Right ventricle myocardium inferior (tissue), 1 donor: ENCODE measurements at regions of chr4 and their contacts with region 1.

Region 1: GRCh38 chr4:105146276-105147015 is at the start of gene TET2:
- DNase-seq: peak; percentile 94
- ATAC-seq: peak; percentile 88
- total RNA-seq, gene TET2: 12.1 TPM

Region 2: DNA sequence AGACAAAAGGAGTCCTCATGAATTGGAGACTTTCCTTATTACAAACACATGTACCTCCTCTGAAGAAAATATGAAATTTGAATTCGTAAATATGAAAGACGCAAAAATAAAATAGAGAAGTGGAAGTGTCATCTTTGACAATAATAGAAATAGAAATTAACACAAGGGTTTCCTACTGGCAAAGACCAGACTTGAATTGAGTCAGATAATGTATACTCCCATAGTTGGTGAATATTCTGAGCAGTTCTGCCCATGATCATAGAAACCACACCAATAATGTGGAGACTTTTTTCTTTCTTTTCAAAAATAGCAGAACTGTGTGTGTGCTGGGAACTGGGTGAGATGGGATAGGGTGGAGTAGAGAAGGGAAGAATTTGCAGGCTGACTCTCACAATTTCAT is 277.5 kb before region 1 on chr4:
- intact Hi-C with region 1: no loop called
- DNase-seq: no peak
- ATAC-seq: no peak

Region 3: GRCh38 chr4:105191621-105192210 is 45.3 kb after region 1 on chr4:
- intact Hi-C with region 1: loop called (anchors 2 kb)
- DNase-seq: no peak
- ATAC-seq: peak; percentile 60

Region 4: DNA sequence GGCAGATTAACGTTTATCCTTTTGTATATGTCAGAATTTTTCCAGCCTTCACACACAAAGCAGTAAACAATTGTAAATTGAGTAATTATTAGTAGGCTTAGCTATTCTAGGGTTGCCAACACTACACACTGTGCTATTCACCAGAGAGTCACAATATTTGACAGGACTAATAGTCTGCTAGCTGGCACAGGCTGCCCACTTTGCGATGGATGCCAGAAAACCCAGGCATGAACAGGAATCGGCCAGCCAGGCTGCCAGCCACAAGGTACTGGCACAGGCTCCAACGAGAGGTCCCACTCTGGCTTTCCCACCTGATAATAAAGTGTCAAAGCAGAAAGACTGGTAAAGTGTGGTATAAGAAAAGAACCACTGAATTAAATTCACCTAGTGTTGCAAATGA is 95.0 kb after region 1 on chr4:
- intact Hi-C with region 1: loop called (anchors 2 kb)
- DNase-seq: peak; percentile 76
- ATAC-seq: peak; percentile 95